Activated CD4-positive, alpha-beta memory T cell treated with anti-CD3 and anti-CD28 coated beads for 36 hours (primary cell): ENCODE measurements at regions of chr15 and their contacts with region 1.

Region 1: DNA sequence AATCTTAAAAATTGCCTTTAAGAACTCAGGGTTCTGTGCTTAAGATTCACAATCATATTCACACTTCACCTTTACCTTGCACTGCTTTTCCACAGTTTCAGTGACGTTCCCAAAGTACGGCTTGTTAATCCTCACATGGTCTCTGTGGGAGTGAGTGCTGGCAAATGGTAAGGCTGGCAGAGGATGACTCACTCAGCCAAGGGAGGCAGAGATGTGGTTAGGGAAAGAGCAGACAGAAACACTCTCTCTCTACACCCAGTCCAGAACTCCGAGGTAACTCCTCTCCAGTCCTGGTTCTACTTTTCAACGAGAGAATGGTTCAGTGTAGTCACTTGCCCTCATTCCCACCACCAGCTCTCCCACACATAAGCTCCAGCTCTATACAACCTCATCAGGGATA is 33.1 kb downstream of the RASGRP1 start:
- DNase-seq: no peak
- H3K4me3 Mint-ChIP-seq: no peak overlapping the region
- H3K27ac Mint-ChIP-seq: peak overlapping the region; percentile 61
- H3K4me1 Mint-ChIP-seq: peaks cover 98% of the 10 kb centered on the region
- H3K27me3 Mint-ChIP-seq: no peaks in the 10 kb centered on the region

Region 2: DNA sequence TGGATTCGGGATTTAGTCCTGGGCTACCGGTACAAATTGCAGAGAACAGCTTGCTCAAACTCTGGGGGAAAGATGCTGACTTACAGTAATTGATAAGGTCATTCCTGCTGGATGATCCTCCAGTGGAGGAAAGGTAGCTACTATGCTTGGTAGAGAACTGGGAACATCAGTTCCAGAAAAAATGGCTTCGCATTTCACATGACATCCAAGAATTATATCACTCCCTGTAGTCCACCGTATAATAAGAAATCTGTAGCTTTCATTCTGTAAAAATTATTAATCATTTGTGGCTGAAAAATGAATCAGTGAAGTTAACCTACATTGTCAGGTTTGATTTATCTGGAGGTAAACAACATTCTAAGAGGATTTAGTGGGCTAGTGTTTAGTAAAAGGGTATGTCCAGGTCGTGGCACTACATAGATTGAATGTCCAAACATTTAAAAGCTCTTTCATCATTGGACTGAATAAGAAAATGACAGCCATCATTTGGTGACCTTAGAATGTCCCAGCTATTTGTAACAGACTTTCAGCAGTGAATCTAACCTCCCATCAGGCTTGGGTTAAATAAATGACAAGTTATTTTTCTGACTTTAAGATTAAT is 800.3 kb before region 1 on chr15:
- CTCF ChIA-PET with region 1: no interaction called
- POLR2A ChIA-PET with region 1: no interaction called
- intact Hi-C with region 1: no loop called
- DNase-seq: no peak
- H3K4me3 Mint-ChIP-seq: no peak overlapping the region
- H3K27ac Mint-ChIP-seq: no peak overlapping the region
- H3K4me1 Mint-ChIP-seq: no peaks in the 10 kb centered on the region
- H3K27me3 Mint-ChIP-seq: peaks cover 4% of the 10 kb centered on the region

Region 3: DNA sequence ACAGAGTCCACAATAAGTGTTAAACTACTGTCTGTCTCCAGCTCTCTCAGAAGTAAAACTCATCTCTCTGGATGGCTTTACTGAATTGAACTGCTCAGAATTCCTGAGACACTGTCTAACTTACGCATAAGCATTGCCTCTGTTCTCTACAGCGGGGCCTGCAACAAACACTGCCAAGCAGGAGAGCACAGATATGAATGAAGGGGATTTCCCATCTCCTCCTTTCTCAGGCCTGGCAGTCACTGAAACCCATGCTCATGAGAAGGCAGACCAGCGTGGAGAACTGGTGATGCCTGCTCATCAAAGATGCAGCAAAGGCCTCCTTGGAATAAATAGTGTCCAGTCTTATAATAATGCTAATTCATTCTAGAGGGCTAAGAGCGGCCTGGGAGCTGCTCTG is 22.8 kb after region 1 on chr15:
- CTCF ChIA-PET with region 1: no interaction called
- POLR2A ChIA-PET with region 1: interaction called, 3 read pairs
- intact Hi-C with region 1: loop called (anchors 1 kb)
- DNase-seq: peak; percentile 72
- H3K4me3 Mint-ChIP-seq: peak overlapping the region; percentile 15
- H3K27ac Mint-ChIP-seq: peak overlapping the region; percentile 99
- H3K4me1 Mint-ChIP-seq: peaks cover 89% of the 10 kb centered on the region
- H3K27me3 Mint-ChIP-seq: no peaks in the 10 kb centered on the region